BJ (cell line): ENCODE measurements at regions of chr3 and their contacts with region 1.

Region 1: GRCh38 chr3:155890671-155891190 is 20.3 kb downstream of the GMPS start:
- DNase-seq: no peak
- H3K4me3 ChIP-seq: no peak overlapping the region
- H3K27me3 ChIP-seq: no peaks in the 10 kb centered on the region
- CTCF ChIP-seq: no peak

Region 2: DNA sequence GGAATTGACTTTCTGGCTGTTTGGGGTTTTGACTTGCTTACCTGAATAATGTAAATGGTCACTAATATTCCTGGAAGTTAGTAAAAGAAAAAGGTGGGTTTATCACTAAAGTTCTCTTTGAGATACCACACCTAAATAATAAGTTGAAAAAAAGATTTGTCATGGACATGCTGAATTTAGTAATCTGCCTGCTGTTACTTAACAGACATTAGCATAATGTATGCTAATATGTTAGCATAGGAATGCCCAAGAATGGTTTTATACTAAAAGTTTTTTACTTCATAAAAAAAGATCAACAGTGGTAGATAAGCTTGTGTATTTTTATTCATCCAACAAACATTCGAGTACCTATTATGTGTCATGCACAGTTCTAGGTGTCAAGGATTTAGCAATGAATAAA is 16.2 kb after region 1 on chr3:
- CTCF ChIA-PET with region 1: no interaction called
- POLR2A ChIA-PET with region 1: interaction called, 14 read pairs
- DNase-seq: no peak
- H3K4me3 ChIP-seq: no peak overlapping the region
- H3K27me3 ChIP-seq: no peaks in the 10 kb centered on the region
- CTCF ChIP-seq: no peak